OCI-LY7 (cell line): ENCODE measurements at regions of chr19 and their contacts with region 1.

Region 1: DNA sequence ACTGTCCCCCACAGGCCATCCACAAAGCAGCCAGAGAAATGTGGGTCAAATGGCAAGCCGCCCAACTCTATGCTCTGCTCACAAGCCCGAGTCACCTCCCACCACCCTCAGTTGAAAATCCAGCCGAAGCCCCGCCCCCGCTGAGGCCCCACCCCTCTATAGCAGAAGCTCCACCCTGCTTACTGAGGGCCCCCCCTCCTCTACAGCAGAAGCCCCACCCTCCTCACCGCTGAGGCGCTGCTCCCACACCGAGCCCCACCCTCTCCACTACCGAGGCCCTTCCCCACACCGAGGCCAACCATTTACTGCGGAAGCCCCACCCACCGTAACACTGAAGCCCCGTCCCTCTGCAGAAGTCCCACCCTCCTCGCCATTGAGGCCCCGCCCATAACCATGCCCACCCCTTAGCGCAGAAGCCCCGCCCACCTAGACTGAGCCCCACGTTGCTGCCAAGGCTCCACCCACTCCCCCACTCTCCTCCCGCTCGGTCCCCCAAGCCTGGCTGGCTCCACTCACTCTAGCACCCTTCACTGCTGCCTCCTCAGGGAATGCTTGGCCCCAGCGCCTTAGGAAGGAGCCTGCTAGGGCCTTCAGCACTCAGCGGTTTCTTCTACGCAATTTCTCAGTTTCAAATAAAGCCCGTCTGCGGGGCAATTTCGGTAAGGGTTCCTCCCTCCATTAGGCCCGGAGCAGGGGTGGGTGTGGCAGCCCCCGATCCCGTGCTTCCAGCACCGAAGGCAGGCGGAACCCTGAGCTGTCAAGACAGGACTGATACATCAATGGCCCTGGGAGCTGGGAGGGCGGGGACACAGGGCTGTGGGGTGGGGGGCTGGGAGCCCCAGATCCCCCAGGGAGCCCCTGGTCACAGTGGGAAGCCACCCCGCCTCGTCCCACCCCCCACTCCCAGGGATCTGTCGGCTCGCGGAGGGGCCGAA is 9.0 kb upstream of the MYDGF start:
- DNase-seq: peak; percentile 19
- H3K4me3 ChIP-seq: no peak overlapping the region
- H3K27ac ChIP-seq: no peak overlapping the region
- H3K4me1 ChIP-seq: no peaks in the 10 kb centered on the region
- CTCF ChIP-seq: no peak

Region 2: GRCh38 chr19:4841366-4841704 is 162.2 kb after region 1 on chr19:
- CTCF ChIA-PET with region 1: interaction called, 11 read pairs
- POLR2A ChIA-PET with region 1: no interaction called
- intact Hi-C with region 1: no loop called
- DNase-seq: no peak
- H3K4me3 ChIP-seq: no peak overlapping the region
- H3K27ac ChIP-seq: peak overlapping the region; percentile 9
- H3K4me1 ChIP-seq: peaks cover 21% of the 10 kb centered on the region
- CTCF ChIP-seq: no peak